Left ventricle myocardium superior (tissue), 1 donor: ENCODE measurements at regions of chr1 and their contacts with region 1.

Region 1: DNA sequence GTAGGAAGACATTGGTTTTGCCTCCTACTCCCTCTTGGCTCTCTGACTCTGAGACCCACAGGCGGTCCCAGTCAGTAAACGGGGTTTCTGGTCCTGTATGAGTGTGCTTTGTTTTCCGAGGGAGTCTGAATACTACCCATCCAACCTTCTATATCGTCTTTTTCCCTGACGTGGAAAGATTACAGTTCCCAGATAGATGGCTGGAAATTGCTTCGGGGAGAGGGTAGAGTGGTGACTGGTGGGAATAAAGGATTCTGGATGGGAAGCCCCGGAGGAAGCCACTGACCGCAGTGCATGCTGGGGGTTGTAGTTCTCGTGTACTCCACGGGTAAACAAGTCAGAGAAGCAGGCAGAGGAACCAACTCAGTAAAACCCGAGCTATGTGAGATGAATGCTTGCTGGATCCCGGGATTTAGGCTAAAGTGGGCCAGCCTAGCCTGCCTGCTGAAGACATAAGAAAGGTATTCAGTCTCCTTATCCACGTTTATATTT is 66.2 kb upstream of the IRF2BP2 start:
- DNase-seq: peak; percentile 87
- ATAC-seq: peak; percentile 97

Region 2: DNA sequence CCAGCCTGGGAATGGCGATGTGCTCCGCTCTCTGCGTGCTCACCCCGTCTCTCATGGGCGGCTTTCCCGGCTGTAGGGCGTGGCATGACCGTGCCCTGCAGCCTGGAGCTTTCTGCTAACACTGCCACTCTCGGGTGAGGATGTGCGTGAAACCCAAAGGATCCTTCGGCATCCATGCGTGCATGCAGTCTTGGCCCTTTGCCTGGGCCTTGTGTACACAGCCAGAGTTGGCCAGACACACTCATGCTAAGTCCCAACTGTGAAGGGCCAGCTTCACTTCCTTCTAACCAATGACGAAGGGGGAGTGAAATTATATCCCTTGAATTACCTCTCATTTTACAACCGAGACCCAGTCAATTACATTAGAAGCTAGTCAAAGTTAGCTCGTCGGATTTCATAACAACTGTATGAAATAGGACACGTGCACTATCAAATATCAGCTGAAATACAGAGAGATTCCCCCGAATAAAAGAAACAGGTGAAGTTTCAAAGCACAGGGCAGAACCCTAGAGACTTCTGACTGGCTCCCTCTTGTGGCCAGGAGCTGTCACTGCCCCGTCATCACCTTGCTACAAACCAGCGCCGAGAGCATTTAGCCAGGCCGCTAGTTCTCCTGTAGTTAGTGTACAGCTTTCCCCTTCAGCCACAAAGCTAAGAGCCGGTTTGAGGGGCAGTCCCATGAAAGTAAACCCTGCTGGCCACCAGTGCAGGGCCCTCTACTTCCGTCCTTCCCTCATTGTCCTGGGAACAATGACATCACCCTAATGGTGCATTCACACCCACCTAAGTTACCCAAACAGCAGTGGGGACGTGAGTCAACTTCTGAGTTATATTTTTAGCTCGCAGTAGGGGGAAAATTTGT is 366.3 kb before region 1 on chr1:
- intact Hi-C with region 1: no loop called
- DNase-seq: peak; percentile 68
- ATAC-seq: peak; percentile 79

Region 3: GRCh38 chr1:234621657-234622335 is 54.4 kb before region 1 on chr1:
- intact Hi-C with region 1: loop called (anchors 10 kb)
- DNase-seq: no peak
- ATAC-seq: peak; percentile 41

Region 4: GRCh38 chr1:234656856-234657654 is 19.1 kb before region 1 on chr1:
- intact Hi-C with region 1: no loop called
- DNase-seq: no peak
- ATAC-seq: peak; percentile 74

Region 5: DNA sequence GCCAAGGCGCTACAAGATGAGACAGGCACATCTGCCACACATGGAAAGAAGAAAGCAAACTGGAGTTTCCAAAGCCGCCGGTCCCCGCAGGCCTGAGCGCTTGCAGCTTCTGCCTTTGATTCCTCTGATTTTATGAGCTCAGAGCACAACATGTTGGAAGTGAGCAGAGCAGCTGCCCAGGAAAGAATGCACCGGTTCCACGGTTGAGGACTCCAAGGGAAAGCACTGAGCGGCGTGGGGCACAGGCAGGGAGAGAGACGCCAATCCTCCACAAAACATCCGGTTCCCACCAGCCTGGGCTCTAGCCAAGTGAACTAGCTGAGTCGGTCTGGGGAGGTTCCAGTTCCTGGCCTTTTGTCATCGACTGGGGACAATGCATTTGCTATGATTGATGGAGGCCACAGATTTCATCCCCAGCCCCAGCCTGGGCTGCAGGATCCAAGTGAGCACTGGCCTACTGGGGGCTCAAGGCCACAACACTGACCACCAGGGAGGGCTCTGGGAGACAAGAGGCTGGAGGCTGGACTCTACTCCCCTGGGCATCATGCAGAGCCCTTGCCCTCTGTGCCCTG is 186.9 kb after region 1 on chr1:
- intact Hi-C with region 1: no loop called
- DNase-seq: peak; percentile 83
- ATAC-seq: peak; percentile 62